ENCODE measurements at regions of chr20 and their contacts with region 1.

Region 1: DNA sequence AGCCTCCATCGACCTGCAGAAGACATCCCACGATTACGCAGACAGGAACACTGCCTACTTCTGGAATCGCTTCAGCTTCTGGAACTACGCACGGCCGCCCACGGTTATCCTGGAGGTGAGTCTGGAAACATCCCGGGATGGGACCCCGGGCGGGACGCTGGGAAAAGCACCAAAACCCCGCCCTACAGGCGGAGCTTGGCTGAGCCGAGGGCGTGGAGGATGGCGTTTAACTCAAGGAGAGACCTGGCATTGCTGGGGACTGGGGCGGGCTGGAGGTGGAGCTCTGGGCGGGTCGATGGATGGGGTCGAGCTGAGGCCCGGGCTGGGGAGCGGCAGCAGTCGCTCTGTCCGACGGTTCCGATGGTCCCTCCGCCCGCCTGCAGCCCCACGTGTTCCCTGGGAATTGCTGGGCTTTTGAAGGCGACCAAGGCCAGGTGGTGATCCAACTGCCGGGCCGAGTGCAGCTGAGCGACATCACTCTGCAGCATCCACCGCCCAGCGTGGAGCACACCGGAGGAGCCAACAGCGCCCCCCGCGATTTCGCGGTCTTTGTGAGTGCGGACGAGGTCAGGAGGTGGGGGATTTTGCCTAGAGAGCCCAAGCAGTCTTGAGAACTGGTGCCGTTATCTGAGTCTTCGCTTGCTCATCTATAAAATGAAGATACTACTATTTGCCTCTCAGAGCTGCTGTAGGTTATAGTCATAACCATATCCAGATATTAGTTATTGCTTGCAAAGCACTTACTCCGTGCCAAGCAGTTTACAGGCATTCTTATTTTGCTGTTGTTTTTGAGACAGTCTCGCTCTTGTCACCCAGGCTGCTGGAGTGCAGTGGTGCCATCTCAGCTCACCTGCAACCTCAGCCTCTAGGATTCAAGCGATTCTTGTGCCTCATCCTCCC is 3.8 kb downstream of the SPAG4 start:
- DNase-seq: peak; percentile 74
- ATAC-seq: peak; percentile 23
- H3K4me3 Mint-ChIP-seq: peak overlapping the region; percentile 87
- H3K27ac Mint-ChIP-seq: peak overlapping the region; percentile 66
- H3K4me1 Mint-ChIP-seq: peaks cover 40% of the 10 kb centered on the region
- H3K27me3 Mint-ChIP-seq: peaks cover 2% of the 10 kb centered on the region
- CTCF ChIP-seq: no peak

Region 2: GRCh38 chr20:35129647-35130069 is 489.8 kb before region 1 on chr20:
- CTCF ChIA-PET with region 1: no interaction called
- POLR2A ChIA-PET with region 1: no interaction called
- intact Hi-C with region 1: no loop called
- DNase-seq: no peak
- ATAC-seq: no peak
- H3K4me3 Mint-ChIP-seq: no peak overlapping the region
- H3K27ac Mint-ChIP-seq: no peak overlapping the region
- H3K4me1 Mint-ChIP-seq: no peaks in the 10 kb centered on the region
- H3K27me3 Mint-ChIP-seq: no peaks in the 10 kb centered on the region
- CTCF ChIP-seq: no peak

Region 3: DNA sequence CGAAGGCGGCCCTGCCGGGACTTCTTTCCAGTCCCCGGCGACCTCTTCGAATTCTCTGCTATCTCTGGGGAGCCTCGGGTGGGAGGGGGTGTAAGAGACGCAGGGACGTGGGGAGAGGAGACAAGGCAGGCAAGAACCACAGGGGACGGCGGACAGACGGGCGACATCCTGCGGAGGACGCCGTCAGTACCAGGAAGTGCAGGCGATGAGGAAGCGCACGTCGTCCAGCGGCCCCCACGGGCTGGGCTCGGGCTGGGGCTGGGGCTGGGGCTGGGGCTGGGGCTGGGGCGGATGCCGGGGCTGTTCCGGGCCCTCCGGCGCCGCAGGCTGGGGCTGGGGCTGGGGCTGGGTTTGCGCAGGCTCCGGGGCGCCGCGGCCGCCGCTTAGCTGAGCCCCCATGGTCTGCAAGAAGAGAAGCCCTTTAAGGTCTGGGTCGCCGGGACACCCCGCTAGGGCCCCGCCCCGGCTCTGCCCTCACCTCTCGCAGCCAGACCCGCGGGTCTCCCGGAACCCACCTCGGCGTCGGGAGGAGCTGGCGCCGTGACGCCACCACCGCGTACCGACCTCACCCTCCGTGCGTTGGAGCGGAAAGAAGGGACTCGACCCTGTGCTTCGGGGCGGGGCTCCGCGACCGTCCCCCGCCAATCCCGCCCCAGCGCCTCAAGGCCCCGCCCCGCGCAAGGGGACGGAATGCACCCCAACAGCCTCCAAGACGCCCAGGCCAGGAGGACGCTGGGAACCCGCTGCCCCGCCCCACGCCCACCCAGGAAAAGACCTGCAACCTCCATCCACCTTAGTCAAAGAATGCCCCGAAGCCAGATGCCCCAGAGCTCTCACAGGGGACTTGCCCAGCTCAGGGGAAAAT is 341.7 kb before region 1 on chr20 and contains the start of gene MMP24OS:
- CTCF ChIA-PET with region 1: no interaction called
- POLR2A ChIA-PET with region 1: interaction called, 4 read pairs
- intact Hi-C with region 1: loop called (anchors 1 kb)
- DNase-seq: peak; percentile 85
- ATAC-seq: peak; percentile 90
- H3K4me3 Mint-ChIP-seq: peak within 1 kb of the TSS; percentile 97
- H3K27ac Mint-ChIP-seq: peak within 1 kb of the TSS; percentile 99
- H3K4me1 Mint-ChIP-seq: peaks cover 31% of the 10 kb centered on the region
- H3K27me3 Mint-ChIP-seq: no peaks in the 10 kb centered on the region
- CTCF ChIP-seq: no peak
- total RNA-seq, gene MMP24OS: 39.2 and 47.9 TPM in 2 replicates

Region 4: DNA sequence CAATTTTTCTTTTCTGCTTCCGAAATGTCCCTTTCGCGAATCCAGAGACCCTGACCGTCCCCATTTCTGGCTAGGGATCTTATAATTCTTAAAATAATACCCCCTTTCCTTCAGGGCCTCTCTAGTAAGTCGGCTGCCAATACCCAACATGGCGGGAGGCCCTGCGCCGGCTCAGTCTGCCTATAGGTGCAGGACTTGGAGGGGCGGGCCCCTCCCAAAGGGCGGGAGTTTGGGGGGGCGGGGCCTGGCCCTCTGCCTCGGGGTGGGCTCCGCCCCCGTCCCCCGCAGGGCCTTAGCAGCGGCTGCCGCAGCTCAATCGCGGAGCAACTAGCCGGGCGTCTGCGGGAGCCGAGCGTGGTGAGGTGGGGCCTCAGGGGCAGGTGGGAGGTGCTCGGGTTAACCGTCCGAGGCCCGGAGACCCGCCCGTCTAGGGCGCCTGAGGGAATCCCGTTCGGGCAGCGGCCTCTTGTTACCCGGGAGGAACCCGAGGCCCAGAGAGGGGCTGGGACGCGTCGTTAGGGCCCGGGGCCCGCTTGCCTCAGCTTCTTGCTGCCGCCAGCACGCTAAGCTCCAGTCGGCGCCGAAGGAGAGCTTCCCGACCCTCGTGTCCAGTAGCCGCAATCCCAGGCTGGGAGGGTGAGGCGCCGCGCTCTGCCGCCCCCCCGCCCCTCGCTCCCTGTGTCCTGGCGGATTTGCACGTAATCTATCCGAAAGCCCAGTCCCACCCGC is 164.4 kb before region 1 on chr20 and contains the start of gene CEP250:
- CTCF ChIA-PET with region 1: interaction called, 3 read pairs
- POLR2A ChIA-PET with region 1: interaction called, 4 read pairs
- intact Hi-C with region 1: loop called (anchors 2 kb)
- DNase-seq: peak; percentile 90
- ATAC-seq: peak; percentile 99
- H3K4me3 Mint-ChIP-seq: peak within 1 kb of the TSS; percentile 93
- H3K27ac Mint-ChIP-seq: peak within 1 kb of the TSS; percentile 99
- H3K4me1 Mint-ChIP-seq: peaks cover 12% of the 10 kb centered on the region
- H3K27me3 Mint-ChIP-seq: no peaks in the 10 kb centered on the region
- CTCF ChIP-seq: no peak
- total RNA-seq, gene CEP250: 49.6 and 54.7 TPM in 2 replicates

Region 5: GRCh38 chr20:35490736-35491181 is 128.7 kb before region 1 on chr20:
- CTCF ChIA-PET with region 1: no interaction called
- POLR2A ChIA-PET with region 1: interaction called, 8 read pairs
- intact Hi-C with region 1: loop called (anchors 2 kb)
- DNase-seq: peak; percentile 44
- ATAC-seq: peak; percentile 99
- H3K4me3 Mint-ChIP-seq: peak overlapping the region; percentile 98
- H3K27ac Mint-ChIP-seq: peak overlapping the region; percentile 98
- H3K4me1 Mint-ChIP-seq: peaks cover 45% of the 10 kb centered on the region
- H3K27me3 Mint-ChIP-seq: no peaks in the 10 kb centered on the region
- CTCF ChIP-seq: no peak

Region 6: DNA sequence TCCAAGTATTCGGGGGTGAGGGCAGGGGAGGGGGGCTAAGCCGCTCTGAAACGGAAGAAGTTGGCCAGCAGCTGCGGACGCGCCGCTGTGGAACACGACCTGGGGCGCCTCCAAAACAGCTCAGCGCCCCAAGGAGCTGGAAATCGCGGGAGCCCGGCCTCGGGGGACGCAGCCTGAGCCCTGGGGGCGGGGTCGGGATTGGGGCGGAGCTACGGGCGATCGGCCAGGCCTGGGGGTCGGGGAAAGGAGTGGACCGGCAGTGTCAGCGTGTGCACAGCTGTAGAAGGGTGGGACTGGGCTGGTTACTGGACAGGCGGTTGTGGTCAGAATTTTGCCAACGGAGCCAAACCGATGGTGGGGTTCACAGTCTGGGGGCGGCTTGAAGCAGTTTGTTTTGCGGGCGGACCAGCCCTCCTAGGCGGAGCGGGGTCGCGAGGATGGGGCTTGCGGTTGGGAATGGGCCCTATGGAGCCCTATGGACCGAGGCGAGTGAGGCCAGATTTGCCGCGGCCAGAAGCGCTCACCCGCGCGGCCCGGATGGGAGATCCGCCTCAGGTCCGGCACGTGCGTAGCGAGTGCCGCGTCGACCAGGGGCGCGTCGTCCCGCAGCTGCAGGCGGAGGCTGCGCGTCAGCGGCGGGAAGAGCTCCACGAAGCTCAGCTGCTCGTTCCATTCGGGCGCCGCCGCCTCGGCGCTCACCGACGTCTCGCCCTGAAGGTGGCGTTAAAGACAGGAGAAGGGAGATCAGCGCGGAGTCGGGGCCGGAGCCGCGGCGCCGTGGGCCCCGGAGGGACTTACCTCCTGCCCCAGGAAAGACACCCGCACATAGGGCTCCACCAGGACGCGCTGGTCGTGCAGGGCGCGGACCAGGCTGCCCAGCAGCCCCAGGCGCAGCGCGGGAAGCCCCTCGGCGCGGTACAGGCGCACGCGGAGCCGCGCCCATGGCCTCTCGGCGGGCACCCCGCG is 18.2 kb before region 1 on chr20:
- CTCF ChIA-PET with region 1: interaction called, 9 read pairs
- POLR2A ChIA-PET with region 1: interaction called, 7 read pairs
- intact Hi-C with region 1: loop called (anchors 1 kb)
- DNase-seq: peak; percentile 58
- ATAC-seq: peak; percentile 78
- H3K4me3 Mint-ChIP-seq: peak overlapping the region; percentile 81
- H3K27ac Mint-ChIP-seq: no peak overlapping the region
- H3K4me1 Mint-ChIP-seq: peaks cover 13% of the 10 kb centered on the region
- H3K27me3 Mint-ChIP-seq: peaks cover 29% of the 10 kb centered on the region
- CTCF ChIP-seq: no peak

Region 7: GRCh38 chr20:35664544-35665221 is 45.2 kb after region 1 on chr20 and contains the starts of genes CPNE1 and RBM12:
- CTCF ChIA-PET with region 1: interaction called, 7 read pairs
- POLR2A ChIA-PET with region 1: interaction called, 44 read pairs
- intact Hi-C with region 1: loop called (anchors 1 kb)
- DNase-seq: peak; percentile 94
- ATAC-seq: peak; percentile 77
- H3K4me3 Mint-ChIP-seq: peak within 1 kb of the TSS; percentile 94
- H3K27ac Mint-ChIP-seq: peak within 1 kb of the TSS; percentile 99
- H3K4me1 Mint-ChIP-seq: peaks cover 48% of the 10 kb centered on the region
- H3K27me3 Mint-ChIP-seq: no peaks in the 10 kb centered on the region
- CTCF ChIP-seq: no peak
- total RNA-seq, gene CPNE1: 234 and 264 TPM in 2 replicates
- total RNA-seq, gene RBM12: 129 and 139 TPM in 2 replicates

Region 8: DNA sequence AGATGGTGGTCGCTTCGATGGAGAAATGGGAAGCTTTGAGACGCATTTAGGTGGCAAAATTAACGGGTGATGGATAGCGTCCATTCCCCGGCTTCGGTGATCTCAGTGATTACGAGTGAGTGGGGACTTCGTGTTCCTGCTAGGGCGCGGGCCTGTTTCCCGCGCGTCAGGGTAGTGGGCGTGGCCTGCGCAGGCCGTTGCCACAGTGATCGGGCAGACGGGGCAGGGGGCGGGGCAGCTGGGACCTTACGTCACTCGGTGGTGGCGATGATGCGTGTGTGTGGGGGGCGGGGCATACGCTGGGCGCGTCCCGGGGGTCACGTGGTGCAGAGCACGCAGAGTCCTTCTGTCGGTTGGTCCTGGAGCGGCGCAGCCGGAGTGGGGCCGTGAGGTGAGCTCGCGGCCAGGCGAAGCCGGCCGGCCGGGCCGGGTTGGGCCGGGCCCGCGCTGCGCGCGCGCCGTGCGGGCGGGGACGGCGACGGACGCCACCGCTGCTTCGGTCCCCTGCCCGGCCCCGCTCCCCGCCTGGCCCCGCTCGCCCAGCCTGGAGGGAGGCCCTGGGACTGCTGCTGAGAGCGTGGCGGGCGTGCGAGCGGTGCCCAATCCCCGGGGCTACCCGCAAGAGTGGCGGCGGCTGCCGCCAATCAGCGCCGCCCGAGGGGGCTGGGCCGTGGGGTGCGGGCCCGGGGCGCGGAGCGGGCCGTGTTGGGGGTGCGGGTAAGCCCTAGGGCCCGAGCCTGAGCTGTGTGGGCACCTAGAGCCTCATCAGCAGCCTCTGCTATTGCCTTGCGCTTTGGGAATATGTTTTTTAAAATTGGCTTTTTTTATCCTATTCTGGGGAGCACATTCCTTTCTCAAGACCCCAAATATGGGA is 152.5 kb after region 1 on chr20 and contains the start of gene PHF20:
- CTCF ChIA-PET with region 1: no interaction called
- POLR2A ChIA-PET with region 1: interaction called, 3 read pairs
- intact Hi-C with region 1: loop called (anchors 5 kb)
- DNase-seq: peak; percentile 98
- ATAC-seq: peak; percentile 85
- H3K4me3 Mint-ChIP-seq: peak within 1 kb of the TSS; percentile 86
- H3K27ac Mint-ChIP-seq: peak within 1 kb of the TSS; percentile 95
- H3K4me1 Mint-ChIP-seq: peaks cover 79% of the 10 kb centered on the region
- H3K27me3 Mint-ChIP-seq: no peaks in the 10 kb centered on the region
- CTCF ChIP-seq: no peak
- total RNA-seq, gene PHF20: 72.3 and 86.0 TPM in 2 replicates

Region 9: GRCh38 chr20:35893942-35894341 is 274.5 kb after region 1 on chr20:
- CTCF ChIA-PET with region 1: no interaction called
- POLR2A ChIA-PET with region 1: no interaction called
- intact Hi-C with region 1: no loop called
- DNase-seq: no peak
- ATAC-seq: peak; percentile 49
- H3K4me3 Mint-ChIP-seq: no peak overlapping the region
- H3K27ac Mint-ChIP-seq: no peak overlapping the region
- H3K4me1 Mint-ChIP-seq: peaks cover 20% of the 10 kb centered on the region
- H3K27me3 Mint-ChIP-seq: no peaks in the 10 kb centered on the region
- CTCF ChIP-seq: no peak

Measured in activated B cell treated with CpG ODN at 0.5 μM for 24 hours (primary cell).